Activated CD4-positive, alpha-beta T cell treated with anti-CD3 and anti-CD28 coated beads for 36 hours (primary cell): ENCODE measurements at regions of chr17 and their contacts with region 1.

Region 1: GRCh38 chr17:39164675-39165143 is 1.3 kb downstream of the ARL5C start:
- DNase-seq: peak; percentile 86
- ATAC-seq: peak; percentile 96
- H3K4me3 Mint-ChIP-seq: peak overlapping the region; percentile 85
- H3K27ac Mint-ChIP-seq: peak overlapping the region; percentile 76
- H3K4me1 Mint-ChIP-seq: peaks cover 24% of the 10 kb centered on the region
- H3K27me3 Mint-ChIP-seq: peaks cover 24% of the 10 kb centered on the region

Region 2: DNA sequence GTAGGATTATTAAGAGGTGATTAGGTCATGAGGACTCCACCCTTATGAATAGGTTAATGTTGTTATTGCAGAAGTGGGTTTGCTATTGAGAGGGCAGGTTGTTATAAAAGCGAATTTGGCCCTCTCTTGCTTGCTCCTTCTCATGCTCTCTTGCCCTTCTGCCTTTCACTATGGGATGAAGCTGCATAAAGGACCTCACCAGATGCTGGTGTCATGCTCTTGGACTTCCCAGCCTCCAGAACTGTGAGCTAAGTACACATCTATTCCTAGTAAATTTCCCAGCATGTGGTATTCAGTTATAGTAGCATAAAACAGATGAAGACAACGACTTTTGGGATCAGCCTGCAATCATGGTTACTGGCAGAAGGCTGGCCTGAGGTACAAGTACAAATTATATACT is 156.1 kb before region 1 on chr17:
- CTCF ChIA-PET with region 1: no interaction called
- POLR2A ChIA-PET with region 1: no interaction called
- intact Hi-C with region 1: no loop called
- DNase-seq: no peak
- ATAC-seq: no peak
- H3K4me3 Mint-ChIP-seq: no peak overlapping the region
- H3K27ac Mint-ChIP-seq: no peak overlapping the region
- H3K4me1 Mint-ChIP-seq: peaks cover 6% of the 10 kb centered on the region
- H3K27me3 Mint-ChIP-seq: no peaks in the 10 kb centered on the region

Region 3: GRCh38 chr17:39174907-39175694 is 10.4 kb after region 1 on chr17:
- CTCF ChIA-PET with region 1: interaction called, 76 read pairs
- POLR2A ChIA-PET with region 1: no interaction called
- intact Hi-C with region 1: loop called in 1 of 2 experiments (anchors 1 kb)
- DNase-seq: peak; percentile 87
- ATAC-seq: peak; percentile 88
- H3K4me3 Mint-ChIP-seq: no peak overlapping the region
- H3K27ac Mint-ChIP-seq: no peak overlapping the region
- H3K4me1 Mint-ChIP-seq: peaks cover 9% of the 10 kb centered on the region
- H3K27me3 Mint-ChIP-seq: no peaks in the 10 kb centered on the region

Region 4: DNA sequence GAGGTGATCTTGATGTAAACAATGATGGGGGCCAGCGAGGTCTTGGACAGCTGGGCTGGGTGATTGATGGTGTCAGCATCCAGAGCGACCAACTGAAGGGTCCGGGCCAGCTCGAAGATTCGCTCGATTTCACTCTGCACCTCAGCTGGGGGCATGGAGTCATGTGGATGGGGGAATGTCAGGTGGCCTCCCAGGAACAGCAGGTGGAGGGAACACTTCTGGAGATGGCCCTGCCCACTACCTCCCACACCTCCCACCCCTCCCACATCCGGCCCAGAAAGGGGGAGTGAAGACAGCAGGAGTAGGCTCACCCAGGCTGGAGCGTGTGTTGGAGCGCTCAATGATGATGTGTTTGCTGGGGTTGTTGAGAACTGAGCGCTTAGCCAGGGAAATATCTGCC is 19.0 kb after region 1 on chr17:
- CTCF ChIA-PET with region 1: interaction called, 13 read pairs
- POLR2A ChIA-PET with region 1: no interaction called
- intact Hi-C with region 1: no loop called
- DNase-seq: no peak
- ATAC-seq: no peak
- H3K4me3 Mint-ChIP-seq: no peak overlapping the region
- H3K27ac Mint-ChIP-seq: no peak overlapping the region
- H3K4me1 Mint-ChIP-seq: no peaks in the 10 kb centered on the region
- H3K27me3 Mint-ChIP-seq: no peaks in the 10 kb centered on the region

Region 5: DNA sequence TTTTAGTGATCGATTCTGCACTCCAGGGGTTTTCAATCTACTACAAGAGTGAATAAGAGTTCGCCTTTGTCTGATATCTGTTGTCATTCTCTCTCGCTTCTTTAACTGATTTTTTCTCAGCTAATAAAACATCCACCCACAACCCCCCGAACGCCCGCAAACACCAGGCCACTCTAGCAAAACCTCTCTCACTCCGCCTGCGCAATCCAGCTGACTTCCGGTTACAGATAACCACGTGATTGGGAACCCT is 35.0 kb after region 1 on chr17:
- CTCF ChIA-PET with region 1: interaction called, 5 read pairs
- POLR2A ChIA-PET with region 1: interaction called, 3 read pairs
- intact Hi-C with region 1: loop called in 1 of 2 experiments (anchors 2 kb)
- DNase-seq: peak; percentile 95
- ATAC-seq: peak; percentile 69
- H3K4me3 Mint-ChIP-seq: peak overlapping the region; percentile 98
- H3K27ac Mint-ChIP-seq: peak overlapping the region; percentile 100
- H3K4me1 Mint-ChIP-seq: peaks cover 51% of the 10 kb centered on the region
- H3K27me3 Mint-ChIP-seq: no peaks in the 10 kb centered on the region

Region 6: DNA sequence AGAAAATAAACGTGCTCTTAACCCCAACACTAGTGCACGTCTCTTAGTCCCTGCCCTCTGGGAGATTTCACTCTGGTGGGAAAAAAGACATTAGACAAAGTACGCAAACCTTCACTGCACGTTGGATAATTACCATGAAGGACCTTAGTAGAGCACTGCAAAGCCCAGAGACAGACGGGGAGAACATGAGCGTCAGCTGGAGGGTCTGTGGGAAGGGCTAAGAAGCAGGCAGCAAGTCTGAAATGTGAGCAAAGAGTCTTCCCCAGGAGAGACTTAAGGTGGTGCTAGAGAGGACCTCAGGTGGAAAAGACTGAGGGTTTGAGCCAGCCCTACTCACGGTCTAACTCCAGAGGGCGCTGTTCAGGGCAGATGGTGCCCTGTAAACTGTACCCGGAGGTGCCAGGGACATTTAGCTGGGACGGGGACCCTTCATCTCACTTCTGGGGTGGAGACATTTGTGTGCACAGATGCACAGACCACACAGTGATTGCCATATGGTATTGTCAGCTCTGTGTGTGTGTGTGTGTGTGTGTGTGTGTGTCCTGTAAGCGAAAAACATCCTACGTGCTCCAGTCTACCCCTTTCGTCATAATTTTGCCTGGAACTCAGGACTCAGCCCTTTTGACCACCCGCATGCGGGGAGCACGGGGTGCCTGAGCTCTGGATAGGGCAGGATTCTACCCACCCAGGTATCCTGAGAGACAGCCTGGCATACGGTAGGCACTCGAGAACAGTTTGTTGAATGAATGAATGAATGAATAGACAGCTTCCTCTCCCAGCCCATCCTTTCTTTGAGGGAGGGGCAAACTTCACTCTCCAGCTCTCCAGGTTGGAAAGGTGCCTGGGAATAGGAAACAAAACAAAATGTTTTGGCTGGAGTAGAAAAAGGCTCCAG is 71.1 kb after region 1 on chr17:
- CTCF ChIA-PET with region 1: interaction called, 8 read pairs
- POLR2A ChIA-PET with region 1: no interaction called
- intact Hi-C with region 1: loop called in 1 of 2 experiments (anchors 5 kb)
- DNase-seq: peak; percentile 78
- ATAC-seq: peak; percentile 84
- H3K4me3 Mint-ChIP-seq: no peak overlapping the region
- H3K27ac Mint-ChIP-seq: no peak overlapping the region
- H3K4me1 Mint-ChIP-seq: peaks cover 41% of the 10 kb centered on the region
- H3K27me3 Mint-ChIP-seq: peaks cover 5% of the 10 kb centered on the region

Region 7: GRCh38 chr17:39244600-39245570 is 80.2 kb after region 1 on chr17:
- CTCF ChIA-PET with region 1: interaction called, 19 read pairs
- POLR2A ChIA-PET with region 1: interaction called, 3 read pairs
- intact Hi-C with region 1: loop called in 1 of 2 experiments (anchors 2 kb)
- DNase-seq: peak; percentile 93
- ATAC-seq: peak; percentile 96
- H3K4me3 Mint-ChIP-seq: no peak overlapping the region
- H3K27ac Mint-ChIP-seq: no peak overlapping the region
- H3K4me1 Mint-ChIP-seq: peaks cover 3% of the 10 kb centered on the region
- H3K27me3 Mint-ChIP-seq: no peaks in the 10 kb centered on the region